ENCODE measurements at regions of chr17 and their contacts with region 1.

Region 1: DNA sequence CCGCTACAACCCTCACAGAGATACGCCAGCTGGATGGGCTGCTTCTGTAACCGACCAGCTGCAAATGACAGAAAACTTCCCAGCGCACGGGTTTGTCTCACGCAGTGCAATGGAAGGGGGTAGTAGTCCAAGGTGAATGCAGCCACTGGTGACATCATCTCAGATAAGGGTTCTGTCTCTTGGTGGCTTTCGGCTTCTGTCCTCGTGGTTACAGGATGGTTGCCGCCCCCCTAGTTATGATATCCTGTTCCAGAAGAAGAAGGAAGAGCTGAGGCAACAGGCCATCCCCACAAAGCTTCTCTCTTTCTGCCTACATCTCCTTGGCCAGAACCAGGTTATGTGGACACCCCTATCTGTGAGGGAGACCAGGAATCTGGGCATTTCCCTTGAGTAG is 40.3 kb upstream of the BAHCC1 start:
- DNase-seq: no peak
- H3K4me3 ChIP-seq: no peak overlapping the region
- H3K27ac ChIP-seq: no peak overlapping the region
- H3K4me1 ChIP-seq: no peaks in the 10 kb centered on the region
- H3K27me3 ChIP-seq: peaks cover 0 to 7% of the 10 kb centered on the region in 2 donors
- CTCF ChIP-seq: no peak
- POLR2A ChIP-seq: no peak

Region 2: GRCh38 chr17:80720610-80721577 is 634.1 kb before region 1 on chr17:
- intact Hi-C with region 1: no loop called
- DNase-seq: no peak
- H3K4me3 ChIP-seq: no peak overlapping the region
- H3K27ac ChIP-seq: no peak overlapping the region
- H3K4me1 ChIP-seq: no peaks in the 10 kb centered on the region
- H3K27me3 ChIP-seq: no peaks in the 10 kb centered on the region
- CTCF ChIP-seq: no peak
- POLR2A ChIP-seq: no peak

Region 3: DNA sequence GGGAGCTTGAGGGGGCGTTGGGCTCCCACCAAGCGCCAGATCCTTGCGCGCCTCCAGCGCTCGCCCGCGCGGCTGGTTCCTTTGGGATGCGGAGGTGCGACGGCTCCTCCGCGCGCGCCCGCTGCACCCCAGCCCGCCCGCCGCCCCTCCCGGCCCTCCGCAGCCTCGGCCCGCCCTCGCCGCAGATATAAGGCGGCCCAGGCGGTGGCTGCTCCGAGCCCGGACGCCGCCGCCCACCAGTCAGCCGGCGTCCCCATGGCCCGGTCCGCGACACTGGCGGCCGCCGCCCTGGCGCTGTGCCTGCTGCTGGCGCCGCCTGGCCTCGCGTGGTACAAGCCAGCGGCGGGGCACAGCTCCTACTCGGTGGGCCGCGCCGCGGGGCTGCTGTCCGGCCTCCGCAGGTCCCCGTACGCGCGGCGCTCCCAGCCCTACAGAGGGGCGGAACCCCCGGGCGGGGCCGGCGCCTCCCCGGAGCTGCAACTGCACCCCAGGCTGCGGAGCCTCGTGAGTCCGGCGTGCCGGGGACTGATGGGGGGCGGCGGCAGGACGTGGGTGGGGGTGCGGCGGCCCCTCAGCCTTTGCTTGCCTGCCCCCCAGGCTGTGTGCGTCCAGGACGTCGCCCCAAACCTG is 547.2 kb after region 1 on chr17 and contains the start of gene NPB:
- intact Hi-C with region 1: no loop called
- DNase-seq: no peak
- H3K4me3 ChIP-seq: peak within 1 kb of the TSS; percentile 23 to 70 (median 49)
- H3K27ac ChIP-seq: no peak within 1 kb of the TSS
- H3K4me1 ChIP-seq: no peaks in the 10 kb centered on the region
- H3K27me3 ChIP-seq: no peaks in the 10 kb centered on the region
- CTCF ChIP-seq: no peak
- POLR2A ChIP-seq: no peak
- total RNA-seq, gene NPB: 2.0 TPM in 1 of 3 donors, not detected in the others

Region 4: DNA sequence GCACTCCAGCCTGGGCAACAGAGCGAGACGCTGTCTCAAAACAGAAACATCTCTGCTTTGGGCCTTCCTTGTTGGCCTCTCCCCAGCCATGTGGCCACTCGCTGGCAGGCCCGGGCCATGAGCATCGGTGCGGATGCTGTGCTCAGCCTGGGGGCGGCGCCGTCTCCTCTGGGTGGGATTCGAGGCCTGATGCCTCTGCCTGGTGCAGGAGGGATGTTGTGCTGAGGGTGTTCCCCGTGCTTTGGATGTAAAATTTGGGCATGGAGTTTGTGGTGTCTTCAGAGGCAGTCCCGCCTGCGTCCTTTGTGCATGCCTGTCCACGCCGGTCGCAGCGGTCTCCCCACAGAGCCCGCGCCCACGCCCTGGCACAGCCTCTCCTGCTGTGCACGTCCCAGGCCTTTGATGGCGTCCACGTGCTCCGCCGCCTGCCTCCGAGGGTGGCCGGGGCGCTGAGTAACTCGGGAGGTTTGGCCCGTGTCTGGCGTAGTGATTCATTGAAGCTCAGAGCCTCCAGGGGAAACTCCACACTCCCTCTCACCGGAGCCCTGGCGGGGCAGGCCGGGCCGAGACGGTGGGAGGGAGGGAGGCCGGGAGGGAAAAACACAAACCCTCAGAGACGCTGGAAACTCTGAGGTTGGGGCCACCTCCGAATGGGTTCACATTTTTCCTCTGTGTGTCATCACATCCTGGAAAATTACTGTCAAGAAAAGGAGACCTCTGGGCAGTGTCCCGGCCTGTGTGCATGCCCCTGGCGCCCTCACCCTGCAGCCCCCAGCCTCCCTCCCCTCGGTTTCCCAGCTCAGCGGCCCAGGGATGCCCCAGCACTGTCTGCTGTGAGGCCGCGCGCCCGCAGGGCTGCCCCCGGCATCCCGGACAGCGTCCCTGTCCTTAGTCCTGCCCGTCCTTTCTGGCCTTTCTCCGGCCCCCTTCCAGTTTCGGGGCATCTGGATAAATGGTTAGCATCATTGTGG is 648.7 kb after region 1 on chr17:
- intact Hi-C with region 1: loop called (anchors 5 kb)
- DNase-seq: peak; percentile 70 to 86
- H3K4me3 ChIP-seq: peak overlapping the region in 2 of 3 donors; percentile 16 to 46
- H3K27ac ChIP-seq: peak overlapping the region; percentile 52 to 65
- H3K4me1 ChIP-seq: peaks cover 4 to 8% of the 10 kb centered on the region in 2 donors
- H3K27me3 ChIP-seq: no peaks in the 10 kb centered on the region
- CTCF ChIP-seq: no peak
- POLR2A ChIP-seq: no peak